ENCODE measurements at regions of chr10 and their contacts with region 1.

Region 1: DNA sequence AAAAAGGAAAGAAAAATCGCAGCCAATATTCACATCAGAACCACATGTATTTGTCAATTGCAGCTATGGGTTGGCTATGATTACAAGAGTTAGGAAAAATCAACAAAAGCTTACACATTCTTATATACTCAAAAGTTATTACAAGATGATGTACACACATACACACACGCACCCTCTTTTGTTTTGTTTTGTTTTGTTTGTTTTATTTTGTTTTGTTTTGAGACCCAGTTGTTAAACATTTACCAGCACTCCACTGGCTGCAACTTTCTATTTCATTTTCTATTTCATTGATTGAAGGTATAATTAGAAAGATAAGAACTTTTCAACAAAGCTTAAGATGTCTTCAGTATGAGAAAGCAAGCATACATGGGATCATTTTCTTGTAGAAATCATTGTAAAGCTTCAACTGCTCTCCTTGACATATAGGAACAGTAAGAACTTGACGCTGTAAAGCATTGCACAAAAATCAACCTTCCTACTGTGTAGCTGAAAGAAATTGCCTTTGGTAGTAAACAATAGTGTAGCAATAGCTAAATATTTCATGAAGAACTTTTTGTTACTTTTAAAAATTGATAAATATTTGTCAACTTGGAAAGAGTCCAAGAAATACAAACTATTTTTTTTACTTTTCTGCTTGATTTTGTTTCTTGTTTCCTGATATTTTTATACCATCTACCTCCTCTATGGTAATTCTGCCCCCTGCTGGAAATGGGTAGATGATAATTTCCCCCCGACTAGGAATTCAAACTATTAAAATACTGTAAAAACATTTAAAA is 205.9 kb downstream of the MBL2 start:
- DNase-seq: peak; percentile 58
- H3K4me3 ChIP-seq: no peak overlapping the region
- H3K27ac ChIP-seq: no peak overlapping the region
- H3K27me3 ChIP-seq: no peaks in the 10 kb centered on the region
- CTCF ChIP-seq: peak; percentile 54

Region 2: GRCh38 chr10:52308251-52309031 is 258.2 kb before region 1 on chr10:
- in situ Hi-C with region 1: loop called (anchors 25 kb)
- DNase-seq: peak; percentile 60
- H3K4me3 ChIP-seq: peak overlapping the region; percentile 65
- H3K27ac ChIP-seq: peak overlapping the region; percentile 3
- H3K27me3 ChIP-seq: no peaks in the 10 kb centered on the region
- CTCF ChIP-seq: peak; percentile 78

Region 3: GRCh38 chr10:52729271-52730104 is 162.8 kb after region 1 on chr10:
- in situ Hi-C with region 1: no loop called
- DNase-seq: no peak
- H3K4me3 ChIP-seq: no peak overlapping the region
- H3K27ac ChIP-seq: no peak overlapping the region
- H3K27me3 ChIP-seq: no peaks in the 10 kb centered on the region
- CTCF ChIP-seq: peak; percentile 33